Thyroid gland (tissue), 4 donors: ENCODE measurements at regions of chr10 and their contacts with region 1.

Region 1: GRCh38 chr10:58064714-58065528 is 202.8 kb downstream of the IPMK start:
- DNase-seq: no peak
- H3K4me3 ChIP-seq: no peak overlapping the region
- H3K27ac ChIP-seq: no peak overlapping the region
- H3K4me1 ChIP-seq: peaks cover 0 to 14% of the 10 kb centered on the region in 2 donors
- H3K27me3 ChIP-seq: no peaks in the 10 kb centered on the region
- CTCF ChIP-seq: peak; percentile 46 to 94 (median 84)
- POLR2A ChIP-seq: no peak

Region 2: GRCh38 chr10:57341294-57341693 is 723.6 kb before region 1 on chr10:
- intact Hi-C with region 1: loop called (anchors 5 kb)
- DNase-seq: no peak
- H3K4me3 ChIP-seq: no peak overlapping the region
- H3K27ac ChIP-seq: no peak overlapping the region
- H3K4me1 ChIP-seq: no peaks in the 10 kb centered on the region
- H3K27me3 ChIP-seq: no peaks in the 10 kb centered on the region
- CTCF ChIP-seq: no peak
- POLR2A ChIP-seq: no peak

Region 3: GRCh38 chr10:58023341-58024073 is 41.4 kb before region 1 on chr10:
- intact Hi-C with region 1: no loop called
- DNase-seq: no peak
- H3K4me3 ChIP-seq: no peak overlapping the region
- H3K27ac ChIP-seq: no peak overlapping the region
- H3K4me1 ChIP-seq: peaks cover 4 to 5% of the 10 kb centered on the region in 2 donors
- H3K27me3 ChIP-seq: no peaks in the 10 kb centered on the region
- CTCF ChIP-seq: no peak
- POLR2A ChIP-seq: no peak

Region 4: DNA sequence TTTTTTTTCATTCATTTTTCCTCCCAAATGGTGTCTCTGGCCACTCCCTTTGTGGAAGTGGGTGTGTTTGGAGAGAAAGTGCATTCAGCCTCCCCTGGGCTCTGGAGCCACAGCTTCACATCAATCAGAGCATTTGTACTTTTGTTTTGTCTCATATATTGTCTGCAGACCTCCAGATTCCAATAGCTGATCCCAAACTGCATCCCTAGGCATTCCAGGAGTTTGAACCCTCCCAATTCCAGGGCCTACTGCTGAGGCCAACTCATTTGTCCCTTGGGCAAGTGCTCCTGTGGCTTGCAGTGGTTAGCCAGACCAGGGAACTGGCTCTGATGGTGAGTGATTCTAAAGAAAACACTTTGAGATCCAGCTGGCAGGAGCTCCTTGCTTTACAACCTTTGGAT is 39.4 kb after region 1 on chr10:
- intact Hi-C with region 1: no loop called
- DNase-seq: peak; percentile 10 to 27
- H3K4me3 ChIP-seq: no peak overlapping the region
- H3K27ac ChIP-seq: no peak overlapping the region
- H3K4me1 ChIP-seq: peaks cover 0 to 19% of the 10 kb centered on the region in 2 donors
- H3K27me3 ChIP-seq: no peaks in the 10 kb centered on the region
- CTCF ChIP-seq: no peak
- POLR2A ChIP-seq: no peak

Region 5: GRCh38 chr10:58237014-58237830 is 172.3 kb after region 1 on chr10:
- intact Hi-C with region 1: no loop called
- DNase-seq: no peak
- H3K4me3 ChIP-seq: no peak overlapping the region
- H3K27ac ChIP-seq: no peak overlapping the region
- H3K4me1 ChIP-seq: no peaks in the 10 kb centered on the region
- H3K27me3 ChIP-seq: no peaks in the 10 kb centered on the region
- CTCF ChIP-seq: no peak
- POLR2A ChIP-seq: no peak